ENCODE measurements at regions of chr7 and their contacts with region 1.

Region 1: DNA sequence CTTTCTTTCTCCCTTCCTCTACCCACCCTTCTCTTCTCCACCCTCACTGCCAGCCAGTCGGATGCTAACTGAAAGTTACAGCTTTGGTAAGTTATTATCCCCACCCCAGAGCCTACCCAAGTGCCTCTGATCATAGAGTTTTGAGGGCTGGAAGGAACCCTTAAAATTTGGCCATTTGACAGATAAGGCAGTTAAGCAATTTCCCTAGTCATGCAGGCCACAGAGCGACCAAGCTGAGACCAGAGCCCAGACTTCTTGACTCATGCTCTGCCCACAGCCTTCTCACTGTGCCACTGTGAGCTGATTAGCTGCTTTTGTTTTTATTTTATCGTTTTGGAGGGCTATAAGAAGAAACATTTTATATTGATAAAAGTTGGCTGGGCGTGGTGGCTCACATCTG is 17.2 kb downstream of the SAP25 start:
- ATAC-seq: no peak
- H3K4me3 ChIP-seq: no peak overlapping the region
- H3K27ac ChIP-seq: no peak overlapping the region
- H3K4me1 ChIP-seq: peaks cover 2 to 4% of the 10 kb centered on the region in 2 donors

Region 2: DNA sequence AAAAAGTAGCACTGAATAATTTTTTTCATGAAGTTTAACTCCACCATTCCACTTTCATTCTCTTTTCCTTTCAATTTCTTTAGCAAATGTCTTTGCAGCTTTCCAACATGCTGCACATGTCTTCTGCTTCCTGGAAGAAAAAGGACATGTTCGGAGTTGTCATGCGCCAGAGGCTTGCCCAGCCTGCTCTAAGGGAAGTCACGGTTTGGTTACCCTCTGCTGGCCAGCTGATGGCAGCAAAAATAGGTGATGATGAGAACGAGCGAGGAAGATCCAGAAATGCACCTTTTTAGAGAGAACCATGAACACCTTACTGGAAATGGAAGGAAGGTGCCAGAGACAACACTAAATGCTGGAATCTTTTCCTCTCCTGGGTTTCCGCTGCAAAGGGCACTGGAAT is 511.8 kb before region 1 on chr7:
- in situ Hi-C with region 1: no loop called
- ATAC-seq: no peak
- H3K4me3 ChIP-seq: no peak overlapping the region
- H3K27ac ChIP-seq: no peak overlapping the region
- H3K4me1 ChIP-seq: peaks cover 3 to 4% of the 10 kb centered on the region in 2 donors

Region 3: DNA sequence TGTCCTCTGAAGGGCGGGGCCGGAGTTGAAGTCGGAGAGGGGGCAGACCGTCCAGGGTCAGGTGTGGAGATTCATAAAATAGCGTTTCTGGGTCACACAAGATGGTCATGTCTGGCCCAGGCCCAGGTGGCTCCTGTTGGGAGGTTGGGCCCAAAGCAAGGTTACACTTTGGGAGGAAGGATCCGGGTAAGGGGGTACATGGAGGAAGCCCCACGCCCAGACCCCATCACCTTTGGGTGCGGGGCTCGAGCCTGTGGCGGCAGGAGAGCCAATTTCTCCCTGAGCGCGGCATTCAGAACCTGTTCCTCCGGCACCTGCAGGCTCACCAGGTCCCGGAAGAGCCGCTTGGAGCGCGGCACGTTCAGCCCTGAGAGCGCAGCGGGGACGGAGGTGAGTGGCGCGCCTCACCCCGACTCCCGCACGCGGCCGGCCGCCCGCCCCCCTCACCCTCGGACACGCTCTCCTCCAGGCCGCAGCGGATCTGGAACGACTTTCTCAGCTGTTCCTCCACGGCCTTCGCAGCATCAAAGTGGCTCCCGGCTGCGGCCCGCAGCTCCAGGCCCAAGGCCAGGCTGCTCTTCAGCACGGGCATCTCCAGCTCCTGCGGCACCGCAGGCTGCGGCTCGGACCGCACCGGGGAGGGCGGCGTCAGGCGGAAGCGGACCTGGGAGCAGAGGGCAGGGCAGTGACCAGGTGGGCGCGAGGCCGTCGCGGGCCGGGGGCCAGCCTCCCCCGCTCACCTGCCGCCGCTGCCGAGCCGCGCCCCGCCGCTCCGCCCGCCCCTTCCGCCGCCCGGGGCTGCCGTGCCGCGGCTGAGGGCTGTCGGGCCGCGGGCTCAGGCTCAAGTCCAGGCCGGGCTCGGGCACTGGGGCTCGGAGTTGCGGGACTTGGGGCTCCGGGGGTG is 120.9 kb before region 1 on chr7:
- in situ Hi-C with region 1: no loop called
- ATAC-seq: peak; percentile 49 to 71 (median 53)
- H3K4me3 ChIP-seq: peak overlapping the region; percentile 76 to 93 (median 84)
- H3K27ac ChIP-seq: peak overlapping the region; percentile 89 to 91
- H3K4me1 ChIP-seq: peaks cover 25 to 32% of the 10 kb centered on the region in 2 donors

Region 4: DNA sequence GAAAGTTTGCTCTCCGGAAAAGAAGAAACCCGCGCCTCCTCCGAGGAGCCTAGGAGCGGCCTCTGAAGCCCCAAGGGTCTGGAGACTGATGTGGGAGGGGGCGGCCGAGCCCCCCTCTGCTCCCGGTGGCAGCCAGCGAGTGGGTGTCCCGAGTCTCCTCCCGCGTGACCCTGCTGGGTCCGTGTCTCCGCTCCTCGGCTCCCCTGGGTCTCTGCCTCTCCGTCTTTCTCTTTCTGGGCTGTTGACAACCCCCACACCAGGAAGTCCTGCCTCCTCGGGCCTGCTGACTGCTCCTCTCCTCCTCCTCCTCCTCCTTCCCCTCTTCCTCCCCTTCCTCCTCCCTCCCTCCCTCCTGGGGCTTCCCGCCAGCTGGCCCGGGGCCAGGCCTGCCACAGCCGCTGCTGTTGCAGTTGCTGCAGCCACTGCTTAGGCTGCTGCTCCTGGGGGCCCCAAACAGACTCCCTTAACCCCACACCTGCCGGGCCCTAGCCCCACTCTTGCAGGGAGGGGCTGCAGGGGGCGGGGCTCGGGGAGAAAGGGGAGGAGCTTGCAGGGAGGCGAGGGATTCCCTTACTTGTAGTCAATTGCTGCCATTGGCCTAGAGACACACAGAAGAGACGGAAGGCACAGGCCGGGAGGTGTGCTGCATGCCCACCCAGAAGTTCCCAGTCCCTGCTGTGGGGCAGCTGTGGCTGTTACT is 77.4 kb before region 1 on chr7 and contains the start of gene TSC22D4:
- in situ Hi-C with region 1: loop called in 5 of 9 experiments (anchors 10 to 25 kb)
- ATAC-seq: peak; percentile 45 to 75 (median 60)
- H3K4me3 ChIP-seq: peak within 1 kb of the TSS; percentile 47 to 59 (median 54)
- H3K27ac ChIP-seq: peak within 1 kb of the TSS; percentile 11 to 63
- H3K4me1 ChIP-seq: peaks cover 18 to 26% of the 10 kb centered on the region in 2 donors
- total RNA-seq, gene TSC22D4: 9.9 to 44.4 (median 22.0) TPM